Naive thymus-derived CD4-positive, alpha-beta T cell (primary cell): ENCODE measurements at regions of chr3 and their contacts with region 1.

Region 1: DNA sequence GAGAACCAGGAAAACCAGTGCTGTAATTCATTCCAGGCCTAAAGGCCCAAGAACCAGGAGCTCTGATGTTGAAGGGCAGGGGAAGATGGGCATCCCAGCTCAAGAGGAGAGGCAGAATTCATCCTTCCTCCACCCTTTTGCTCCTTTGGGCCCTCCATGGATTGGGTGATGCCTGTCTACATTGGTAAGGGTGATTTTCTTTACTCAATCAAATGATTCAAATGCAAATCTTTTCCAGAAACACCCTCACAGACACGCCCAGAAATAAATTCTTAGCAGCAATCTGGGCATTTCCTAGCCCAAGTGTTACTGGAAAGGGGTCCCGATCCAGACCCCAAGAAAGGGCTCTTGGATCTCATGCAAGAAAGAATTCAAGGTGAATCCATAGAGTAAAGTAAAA is 17.6 kb upstream of the APOD start:
- DNase-seq: no peak
- ATAC-seq: no peak
- H3K4me3 ChIP-seq: no peak overlapping the region
- H3K4me3 Mint-ChIP-seq: no peak overlapping the region
- H3K27ac ChIP-seq: no peak overlapping the region
- H3K27ac Mint-ChIP-seq: no peak overlapping the region
- H3K4me1 ChIP-seq: no peaks in the 10 kb centered on the region
- H3K4me1 Mint-ChIP-seq: peaks cover 0 to 5% (median 0%) of the 10 kb centered on the region in 7 donors
- H3K27me3 ChIP-seq: no peaks in the 10 kb centered on the region
- H3K27me3 Mint-ChIP-seq: no peaks in the 10 kb centered on the region

Region 2: GRCh38 chr3:195385526-195385925 is 215.9 kb before region 1 on chr3:
- CTCF ChIA-PET with region 1: no interaction called
- POLR2A ChIA-PET with region 1: no interaction called
- intact Hi-C with region 1: loop called in 1 of 2 experiments (anchors 5 kb)
- DNase-seq: no peak
- ATAC-seq: no peak
- H3K4me3 ChIP-seq: no peak overlapping the region
- H3K4me3 Mint-ChIP-seq: no peak overlapping the region
- H3K27ac ChIP-seq: no peak overlapping the region
- H3K27ac Mint-ChIP-seq: peak overlapping the region in 6 of 9 donors; percentile 1 to 65 (median 48)
- H3K4me1 ChIP-seq: no peaks in the 10 kb centered on the region
- H3K4me1 Mint-ChIP-seq: peaks cover 24 to 66% (median 49%) of the 10 kb centered on the region in 7 donors
- H3K27me3 ChIP-seq: no peaks in the 10 kb centered on the region
- H3K27me3 Mint-ChIP-seq: no peaks in the 10 kb centered on the region

Region 3: DNA sequence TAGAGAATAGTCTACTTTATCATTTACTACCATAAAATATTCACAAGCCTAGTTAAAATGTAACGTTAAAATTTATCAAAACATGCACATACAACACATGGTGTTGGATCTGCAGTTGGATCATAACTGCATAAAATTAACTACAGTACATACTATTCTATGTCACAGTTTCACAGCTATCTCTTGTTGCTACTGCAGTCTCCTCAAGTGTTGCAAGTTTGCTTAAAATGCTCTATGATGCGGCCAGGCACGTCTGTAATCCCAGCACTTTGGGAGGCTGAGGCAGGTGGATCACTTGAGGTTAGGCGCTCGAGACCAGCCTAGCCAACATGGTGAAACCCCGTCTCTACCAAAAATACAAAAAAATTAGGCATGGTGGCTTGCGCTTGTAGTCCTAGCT is 68.5 kb before region 1 on chr3:
- CTCF ChIA-PET with region 1: no interaction called
- POLR2A ChIA-PET with region 1: no interaction called
- intact Hi-C with region 1: no loop called
- DNase-seq: no peak
- ATAC-seq: no peak
- H3K4me3 ChIP-seq: no peak overlapping the region
- H3K4me3 Mint-ChIP-seq: peak overlapping the region in 9 of 10 donors; percentile 10 to 98 (median 68)
- H3K27ac ChIP-seq: peak overlapping the region; percentile 56
- H3K27ac Mint-ChIP-seq: peak overlapping the region in 8 of 9 donors; percentile 21 to 91 (median 62)
- H3K4me1 ChIP-seq: peaks cover 53 to 60% of the 10 kb centered on the region in 2 donors
- H3K4me1 Mint-ChIP-seq: peaks cover 44 to 98% (median 90%) of the 10 kb centered on the region in 7 donors
- H3K27me3 ChIP-seq: no peaks in the 10 kb centered on the region
- H3K27me3 Mint-ChIP-seq: no peaks in the 10 kb centered on the region

Region 4: DNA sequence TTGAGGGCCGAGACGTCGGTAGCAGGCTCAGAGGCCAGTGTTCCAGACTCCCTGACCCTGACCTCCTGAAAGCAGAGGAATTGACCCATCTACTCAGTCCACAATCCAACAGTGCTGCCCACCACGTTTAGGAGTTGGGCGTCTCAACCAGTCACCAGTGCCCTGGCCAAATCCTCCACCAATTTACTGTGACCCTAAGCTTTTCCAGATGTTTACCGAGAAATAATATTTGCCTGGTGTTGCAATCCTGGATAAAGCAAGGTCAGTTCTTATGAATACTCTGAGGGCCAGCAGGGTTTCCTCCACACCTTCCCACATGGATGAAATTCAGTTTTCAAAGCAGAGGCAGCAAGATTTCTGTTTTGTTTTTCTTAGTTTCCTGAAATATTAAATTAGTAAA is 10.2 kb before region 1 on chr3:
- CTCF ChIA-PET with region 1: no interaction called
- POLR2A ChIA-PET with region 1: no interaction called
- intact Hi-C with region 1: no loop called
- DNase-seq: no peak
- ATAC-seq: no peak
- H3K4me3 ChIP-seq: no peak overlapping the region
- H3K4me3 Mint-ChIP-seq: no peak overlapping the region
- H3K27ac ChIP-seq: no peak overlapping the region
- H3K27ac Mint-ChIP-seq: peak overlapping the region in 1 of 9 donors; percentile 65
- H3K4me1 ChIP-seq: peaks cover 7% of the 10 kb centered on the region in 2 donors
- H3K4me1 Mint-ChIP-seq: peaks cover 0 to 7% (median 0%) of the 10 kb centered on the region in 7 donors
- H3K27me3 ChIP-seq: no peaks in the 10 kb centered on the region
- H3K27me3 Mint-ChIP-seq: no peaks in the 10 kb centered on the region

Region 5: DNA sequence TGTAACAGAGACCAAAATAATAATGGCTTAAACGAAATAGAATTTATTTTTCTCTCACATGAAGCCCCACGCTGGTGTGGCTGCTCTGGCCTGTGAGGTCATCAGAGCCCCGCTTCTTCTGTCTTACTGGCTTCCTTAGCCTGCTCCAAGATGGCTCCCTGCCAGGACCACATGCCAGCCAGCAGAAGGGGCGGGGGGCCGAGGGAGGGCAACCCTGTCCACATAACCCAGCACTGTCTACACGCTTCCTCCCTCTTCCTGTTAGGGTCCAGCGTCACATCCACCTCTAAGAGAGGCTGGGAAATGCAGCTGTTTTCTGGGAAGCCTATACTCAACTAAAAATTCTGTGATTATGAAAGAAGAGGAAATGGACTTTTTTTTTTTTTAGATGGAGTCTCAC is 1804.9 kb after region 1 on chr3:
- CTCF ChIA-PET with region 1: no interaction called
- POLR2A ChIA-PET with region 1: no interaction called
- intact Hi-C with region 1: no loop called
- DNase-seq: no peak
- ATAC-seq: no peak
- H3K4me3 ChIP-seq: no peak overlapping the region
- H3K4me3 Mint-ChIP-seq: no peak overlapping the region
- H3K27ac ChIP-seq: no peak overlapping the region
- H3K27ac Mint-ChIP-seq: no peak overlapping the region
- H3K4me1 ChIP-seq: no peaks in the 10 kb centered on the region
- H3K4me1 Mint-ChIP-seq: peaks cover 0 to 5% (median 0%) of the 10 kb centered on the region in 7 donors
- H3K27me3 ChIP-seq: no peaks in the 10 kb centered on the region
- H3K27me3 Mint-ChIP-seq: peaks cover 0 to 6% (median 0%) of the 10 kb centered on the region in 5 donors